ENCODE measurements at regions of chr2 and their contacts with region 1.

Region 1: GRCh38 chr2:37168217-37168981 is 11.6 kb upstream of the EIF2AK2 start:
- DNase-seq: peak; percentile 44
- H3K4me3 Mint-ChIP-seq: peak overlapping the region; percentile 52
- H3K27ac Mint-ChIP-seq: peak overlapping the region; percentile 88
- H3K4me1 Mint-ChIP-seq: no peaks in the 10 kb centered on the region
- H3K27me3 Mint-ChIP-seq: no peaks in the 10 kb centered on the region
- CTCF ChIP-seq: no peak

Region 2: GRCh38 chr2:37005118-37005868 is 163.1 kb before region 1 on chr2:
- CTCF ChIA-PET with region 1: no interaction called
- intact Hi-C with region 1: no loop called
- DNase-seq: peak; percentile 11
- H3K4me3 Mint-ChIP-seq: no peak overlapping the region
- H3K27ac Mint-ChIP-seq: no peak overlapping the region
- H3K4me1 Mint-ChIP-seq: no peaks in the 10 kb centered on the region
- H3K27me3 Mint-ChIP-seq: no peaks in the 10 kb centered on the region
- CTCF ChIP-seq: peak; percentile 69

Region 3: DNA sequence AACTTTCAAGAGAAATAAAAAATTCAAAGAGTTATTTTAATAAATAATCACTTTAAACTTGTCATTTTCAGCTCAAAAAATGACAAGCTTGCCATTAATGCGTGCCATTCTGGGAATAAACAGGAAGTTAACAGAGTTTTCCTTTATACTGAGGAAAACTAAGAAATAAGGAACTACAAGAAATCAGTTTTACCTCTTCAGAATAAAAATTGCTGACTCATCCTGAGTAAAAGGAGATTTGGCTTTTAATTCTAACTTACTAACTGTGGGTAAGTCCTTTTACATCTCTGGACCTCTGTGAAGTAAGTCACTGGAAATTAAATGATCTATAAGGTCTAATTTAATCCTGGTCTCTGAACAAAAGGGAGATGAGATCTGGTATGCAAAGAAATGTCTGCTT is 46.9 kb after region 1 on chr2:
- CTCF ChIA-PET with region 1: no interaction called
- intact Hi-C with region 1: loop called (anchors 5 kb)
- DNase-seq: no peak
- H3K4me3 Mint-ChIP-seq: no peak overlapping the region
- H3K27ac Mint-ChIP-seq: no peak overlapping the region
- H3K4me1 Mint-ChIP-seq: no peaks in the 10 kb centered on the region
- H3K27me3 Mint-ChIP-seq: no peaks in the 10 kb centered on the region
- CTCF ChIP-seq: no peak

Region 4: GRCh38 chr2:37441055-37441454 is 272.7 kb after region 1 on chr2:
- CTCF ChIA-PET with region 1: no interaction called
- intact Hi-C with region 1: no loop called
- DNase-seq: no peak
- H3K4me3 Mint-ChIP-seq: no peak overlapping the region
- H3K27ac Mint-ChIP-seq: no peak overlapping the region
- H3K4me1 Mint-ChIP-seq: no peaks in the 10 kb centered on the region
- H3K27me3 Mint-ChIP-seq: no peaks in the 10 kb centered on the region
- CTCF ChIP-seq: no peak